ENCODE measurements at regions of chr15 and their contacts with region 1.

Region 1: GRCh38 chr15:70461992-70462391 is 301.4 kb downstream of the UACA start:
- DNase-seq: no peak
- ATAC-seq: no peak
- H3K4me3 ChIP-seq: no peak overlapping the region
- H3K4me3 Mint-ChIP-seq: no peak overlapping the region
- H3K27ac ChIP-seq: no peak overlapping the region
- H3K27ac Mint-ChIP-seq: no peak overlapping the region
- H3K4me1 ChIP-seq: peaks cover 15% of the 10 kb centered on the region
- H3K4me1 Mint-ChIP-seq: peaks cover 10% of the 10 kb centered on the region
- H3K27me3 ChIP-seq: no peaks in the 10 kb centered on the region
- H3K27me3 Mint-ChIP-seq: no peaks in the 10 kb centered on the region
- CTCF ChIP-seq: no peak

Region 2: DNA sequence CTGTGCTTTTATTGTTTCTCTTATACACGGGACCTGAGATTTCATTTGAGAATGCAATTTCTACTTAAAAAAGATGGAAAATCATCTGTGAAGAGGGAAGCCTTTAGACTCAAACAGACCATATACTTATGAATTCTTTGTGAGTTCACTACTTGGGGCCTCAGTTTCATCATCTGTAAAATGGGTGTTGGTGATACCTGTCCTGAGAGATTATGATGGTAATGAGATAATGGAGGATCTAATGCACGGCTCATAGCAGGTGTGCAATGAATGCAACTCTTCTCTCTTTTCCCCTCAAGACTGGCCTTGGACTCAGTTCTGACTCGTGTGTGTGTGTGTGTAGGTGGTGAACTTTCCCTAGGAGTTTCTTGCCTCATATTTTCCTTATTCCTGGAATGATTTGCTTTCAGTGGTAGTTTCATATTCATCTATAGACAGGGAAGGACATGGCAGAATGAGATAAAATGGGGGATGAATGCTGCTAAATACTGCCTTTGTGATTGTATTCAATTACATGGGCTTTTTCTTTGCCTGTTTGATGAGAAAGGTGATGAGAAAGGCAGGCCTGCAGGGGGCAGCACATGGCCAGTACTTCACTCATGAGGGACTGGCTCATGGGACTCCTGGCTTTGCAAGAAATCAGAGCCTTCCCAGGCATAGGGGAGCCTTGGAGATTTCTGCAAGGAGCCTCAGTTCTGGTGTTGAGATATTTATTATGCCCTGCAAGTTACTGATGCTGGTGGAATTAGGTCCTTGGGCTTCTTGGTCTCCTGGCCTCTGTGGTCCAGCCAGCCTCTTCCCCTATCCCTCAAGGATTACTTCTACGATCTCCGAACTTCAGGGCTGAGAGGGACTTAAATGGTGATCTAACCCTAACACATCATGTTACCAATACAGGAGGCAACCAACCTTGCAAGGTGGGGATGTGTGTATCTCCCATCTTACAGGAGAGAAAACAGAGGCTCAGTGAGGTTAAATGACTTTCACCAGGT is 938.7 kb before region 1 on chr15:
- CTCF ChIA-PET with region 1: no interaction called
- POLR2A ChIA-PET with region 1: no interaction called
- intact Hi-C with region 1: loop called in 1 of 2 experiments (anchors 2 kb)
- DNase-seq: peak; percentile 48 to 76 (median 61)
- ATAC-seq: no peak
- H3K4me3 ChIP-seq: no peak overlapping the region
- H3K4me3 Mint-ChIP-seq: no peak overlapping the region
- H3K27ac ChIP-seq: no peak overlapping the region
- H3K27ac Mint-ChIP-seq: no peak overlapping the region
- H3K4me1 ChIP-seq: no peaks in the 10 kb centered on the region
- H3K4me1 Mint-ChIP-seq: no peaks in the 10 kb centered on the region
- H3K27me3 ChIP-seq: peaks cover 0 to 1% of the 10 kb centered on the region in 2 experiments
- H3K27me3 Mint-ChIP-seq: peaks cover 4% of the 10 kb centered on the region
- CTCF ChIP-seq: peak; percentile 53

Region 3: DNA sequence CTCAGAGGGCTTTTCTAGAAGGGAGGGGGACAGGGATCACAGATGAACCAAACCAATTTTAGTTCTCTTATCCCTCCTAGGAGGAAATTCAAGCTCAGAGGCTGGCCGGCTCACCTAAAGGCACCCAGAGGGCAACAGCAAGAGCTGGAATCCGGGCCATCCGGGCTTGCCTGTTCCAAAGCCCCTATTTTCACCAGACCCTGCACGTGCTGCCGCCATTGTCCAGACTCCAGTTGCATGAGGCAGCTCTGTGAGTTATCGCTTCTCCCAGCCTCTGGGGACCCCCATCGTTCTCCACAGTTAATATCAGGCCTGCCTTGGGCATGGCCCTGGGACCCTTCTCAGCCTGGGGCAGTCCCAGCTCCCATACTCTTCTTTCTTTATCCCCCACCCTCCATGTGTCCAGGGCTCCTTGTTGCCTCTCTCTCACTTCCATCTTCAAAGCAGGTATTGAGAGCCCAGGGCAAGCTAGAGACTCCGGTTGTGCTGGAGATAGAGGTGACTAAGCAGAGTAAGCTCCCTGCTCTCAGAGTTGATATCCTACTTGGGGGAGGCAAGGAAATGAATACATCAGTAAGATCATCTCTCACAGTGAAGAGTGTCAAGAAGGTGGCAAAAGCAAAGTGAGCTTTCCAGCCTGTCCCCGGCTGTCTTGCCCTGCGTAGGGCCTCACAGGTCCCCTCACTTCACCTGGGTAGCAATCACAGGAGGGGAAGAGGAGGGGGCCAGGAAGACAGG is 21.4 kb before region 1 on chr15:
- CTCF ChIA-PET with region 1: no interaction called
- POLR2A ChIA-PET with region 1: no interaction called
- intact Hi-C with region 1: no loop called
- DNase-seq: no peak
- ATAC-seq: no peak
- H3K4me3 ChIP-seq: no peak overlapping the region
- H3K4me3 Mint-ChIP-seq: no peak overlapping the region
- H3K27ac ChIP-seq: no peak overlapping the region
- H3K27ac Mint-ChIP-seq: no peak overlapping the region
- H3K4me1 ChIP-seq: peaks cover 15% of the 10 kb centered on the region
- H3K4me1 Mint-ChIP-seq: peaks cover 17% of the 10 kb centered on the region
- H3K27me3 ChIP-seq: peaks cover 4 to 12% of the 10 kb centered on the region in 2 experiments
- H3K27me3 Mint-ChIP-seq: peaks cover 24% of the 10 kb centered on the region
- CTCF ChIP-seq: no peak

Measured in CD4-positive, alpha-beta T cell (primary cell).